H1 (cell line): ENCODE measurements at regions of chr10 and their contacts with region 1.

Region 1: GRCh38 chr10:78047314-78047891 is 13.7 kb downstream of the RPS24 start:
- DNase-seq: peak; percentile 86 to 98
- H3K4me3 ChIP-seq: no peak overlapping the region
- H3K27ac ChIP-seq: no peak overlapping the region
- H3K4me1 ChIP-seq: peaks cover 4 to 5% (median 4%) of the 10 kb centered on the region in 4 experiments; a peak in 6 of 7 replicates
- H3K27me3 ChIP-seq: no peaks in the 10 kb centered on the region
- CTCF ChIP-seq: peak; percentile 87 to 98 (median 97)
- EP300 ChIP-seq: no peak
- POLR2A ChIP-seq: no peak
- RAD21 ChIP-seq: peak; percentile 98 to 99

Region 2: DNA sequence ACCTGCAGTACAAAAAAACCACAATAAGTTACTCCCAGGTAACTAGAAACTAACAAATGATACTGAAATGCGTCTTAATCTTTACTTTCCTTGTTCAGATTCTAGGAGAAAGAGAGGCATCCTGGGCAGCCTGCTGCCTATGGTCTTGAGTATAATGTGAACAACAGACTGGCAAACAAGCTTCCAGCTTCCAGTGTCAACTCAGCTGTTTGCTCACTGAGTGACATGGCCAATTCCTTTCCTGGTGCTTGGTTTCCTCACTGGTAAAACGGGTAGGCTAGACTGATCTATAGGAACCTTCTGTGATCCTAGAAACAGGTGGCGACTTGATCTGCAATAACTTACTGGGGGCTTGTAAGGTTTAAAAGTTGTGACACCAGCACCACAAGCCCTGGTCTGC is 28.1 kb before region 1 on chr10:
- CTCF ChIA-PET with region 1: no interaction called
- POLR2A ChIA-PET with region 1: no interaction called
- DNase-seq: no peak
- H3K4me3 ChIP-seq: no peak overlapping the region
- H3K27ac ChIP-seq: no peak overlapping the region
- H3K4me1 ChIP-seq: no peaks in the 10 kb centered on the region
- H3K27me3 ChIP-seq: no peaks in the 10 kb centered on the region
- CTCF ChIP-seq: no peak
- EP300 ChIP-seq: no peak
- POLR2A ChIP-seq: no peak
- RAD21 ChIP-seq: no peak

Region 3: GRCh38 chr10:78029269-78030226 is 17.9 kb before region 1 on chr10 and contains the start of gene POLR3A:
- CTCF ChIA-PET with region 1: interaction called, 8 read pairs
- POLR2A ChIA-PET with region 1: interaction called, 41 read pairs
- DNase-seq: peak; percentile 89 to 91
- H3K4me3 ChIP-seq: peak within 1 kb of the TSS; percentile 75 to 89 (median 82)
- H3K27ac ChIP-seq: peak within 1 kb of the TSS; percentile 55; the same call in 1 of the 2 replicates
- H3K4me1 ChIP-seq: no peaks in the 10 kb centered on the region; a peak in 1 of 7 replicates
- H3K27me3 ChIP-seq: no peaks in the 10 kb centered on the region; a peak in 2 of 7 replicates
- CTCF ChIP-seq: peak; percentile 42 to 66 (median 46)
- EP300 ChIP-seq: peak in 1 of 2 experiments; percentile 42; a peak in 1 of 3 replicates
- POLR2A ChIP-seq: no peak; a peak in 1 of 3 replicates
- RAD21 ChIP-seq: peak in 1 of 2 experiments; percentile 7; a peak in 1 of 4 replicates
- total RNA-seq, gene POLR3A: 35.8 and 38.6 TPM in 2 replicates

Region 4: GRCh38 chr10:78109210-78109609 is 61.8 kb after region 1 on chr10:
- CTCF ChIA-PET with region 1: interaction called, 28 read pairs
- POLR2A ChIA-PET with region 1: interaction called, 4 read pairs
- DNase-seq: peak in 1 of 2 experiments; percentile 10
- H3K4me3 ChIP-seq: no peak overlapping the region
- H3K27ac ChIP-seq: no peak overlapping the region
- H3K4me1 ChIP-seq: peaks cover 0 to 5% (median 4%) of the 10 kb centered on the region in 4 experiments; a peak in 3 of 7 replicates
- H3K27me3 ChIP-seq: no peaks in the 10 kb centered on the region
- CTCF ChIP-seq: peak in 2 of 3 experiments; percentile 16 to 44; a peak in 2 of 4 replicates
- EP300 ChIP-seq: no peak
- POLR2A ChIP-seq: no peak
- RAD21 ChIP-seq: peak; percentile 23 to 47

Region 5: GRCh38 chr10:78155722-78156121 is 108.3 kb after region 1 on chr10:
- CTCF ChIA-PET with region 1: interaction called, 26 read pairs
- POLR2A ChIA-PET with region 1: interaction called, 4 read pairs
- DNase-seq: no peak
- H3K4me3 ChIP-seq: no peak overlapping the region
- H3K27ac ChIP-seq: no peak overlapping the region
- H3K4me1 ChIP-seq: no peaks in the 10 kb centered on the region
- H3K27me3 ChIP-seq: no peaks in the 10 kb centered on the region
- CTCF ChIP-seq: peak in 1 of 3 experiments; percentile 32; a peak in 2 of 4 replicates
- EP300 ChIP-seq: no peak
- POLR2A ChIP-seq: no peak
- RAD21 ChIP-seq: peak; percentile 23 to 34; a peak in 3 of 4 replicates

Region 6: DNA sequence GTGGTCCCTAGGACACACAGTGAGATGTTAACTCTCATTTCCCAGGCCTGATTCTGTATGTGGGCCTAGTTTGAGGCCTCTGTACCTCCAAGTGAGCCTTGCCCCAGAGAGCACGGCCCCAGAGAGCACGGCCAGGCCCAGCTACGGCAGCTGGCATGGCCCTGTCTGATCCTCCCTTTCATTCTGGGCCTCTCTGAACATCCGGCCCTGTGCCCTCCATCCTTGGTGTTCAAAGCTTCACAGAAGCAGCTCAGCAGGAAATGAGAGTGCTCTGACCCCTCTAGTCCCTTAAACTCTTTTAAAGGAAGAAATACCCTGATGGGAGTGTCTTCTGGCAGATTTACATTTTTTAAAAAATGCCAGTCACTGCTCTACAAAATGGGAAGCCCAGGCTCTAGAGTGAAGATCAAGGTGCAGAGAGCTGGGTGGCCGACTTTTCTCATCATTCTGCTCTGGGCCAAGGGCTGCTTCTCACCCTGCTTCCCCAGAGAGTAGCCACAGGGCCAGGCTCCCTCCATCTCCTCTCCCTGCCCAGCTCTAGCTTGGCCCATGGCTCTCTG is 158.1 kb after region 1 on chr10:
- CTCF ChIA-PET with region 1: interaction called, 17 read pairs
- POLR2A ChIA-PET with region 1: interaction called, 4 read pairs
- DNase-seq: no peak
- H3K4me3 ChIP-seq: no peak overlapping the region
- H3K27ac ChIP-seq: no peak overlapping the region
- H3K4me1 ChIP-seq: no peaks in the 10 kb centered on the region
- H3K27me3 ChIP-seq: no peaks in the 10 kb centered on the region
- CTCF ChIP-seq: no peak
- EP300 ChIP-seq: no peak
- POLR2A ChIP-seq: no peak
- RAD21 ChIP-seq: no peak

Region 7: DNA sequence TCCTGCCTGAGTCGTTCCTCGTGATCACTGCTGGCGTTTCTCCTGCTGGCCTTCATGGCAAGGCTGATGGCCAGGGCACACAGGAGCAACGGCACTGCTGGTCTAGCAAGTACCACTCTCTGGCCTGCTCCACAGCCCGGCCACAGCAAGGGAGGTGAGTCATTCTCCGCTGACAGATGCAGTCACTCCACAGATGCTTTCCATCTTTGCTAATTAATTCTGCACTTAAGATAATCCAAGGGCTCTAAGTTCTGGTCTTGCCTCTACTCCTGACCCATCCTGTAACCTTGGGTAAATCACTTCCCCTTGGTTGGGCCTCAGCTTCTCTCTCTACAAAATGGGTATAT is 230.6 kb after region 1 on chr10:
- CTCF ChIA-PET with region 1: interaction called, 10 read pairs
- POLR2A ChIA-PET with region 1: interaction called, 3 read pairs
- DNase-seq: no peak
- H3K4me3 ChIP-seq: no peak overlapping the region
- H3K27ac ChIP-seq: no peak overlapping the region
- H3K4me1 ChIP-seq: peaks cover 0 to 8% (median 5%) of the 10 kb centered on the region in 4 experiments; a peak in 6 of 7 replicates
- H3K27me3 ChIP-seq: no peaks in the 10 kb centered on the region
- CTCF ChIP-seq: no peak
- EP300 ChIP-seq: no peak
- POLR2A ChIP-seq: no peak
- RAD21 ChIP-seq: no peak